ENCODE measurements at regions of chr19 and their contacts with region 1.

Region 1: GRCh38 chr19:4342615-4343369 is 570 bp upstream of the MPND start:
- DNase-seq: peak; percentile 80 to 99 (median 87)
- ATAC-seq: peak; percentile 78
- H3K4me3 ChIP-seq: peak overlapping the region; percentile 72 to 100
- H3K4me3 Mint-ChIP-seq: peak overlapping the region; percentile 92
- H3K27ac ChIP-seq: peak overlapping the region; percentile 81 to 83
- H3K27ac Mint-ChIP-seq: peak overlapping the region; percentile 91
- H3K4me1 ChIP-seq: peaks cover 20% of the 10 kb centered on the region
- H3K4me1 Mint-ChIP-seq: peaks cover 36% of the 10 kb centered on the region
- H3K27me3 ChIP-seq: no peaks in the 10 kb centered on the region
- H3K27me3 Mint-ChIP-seq: no peaks in the 10 kb centered on the region
- CTCF ChIP-seq: no peak

Region 2: DNA sequence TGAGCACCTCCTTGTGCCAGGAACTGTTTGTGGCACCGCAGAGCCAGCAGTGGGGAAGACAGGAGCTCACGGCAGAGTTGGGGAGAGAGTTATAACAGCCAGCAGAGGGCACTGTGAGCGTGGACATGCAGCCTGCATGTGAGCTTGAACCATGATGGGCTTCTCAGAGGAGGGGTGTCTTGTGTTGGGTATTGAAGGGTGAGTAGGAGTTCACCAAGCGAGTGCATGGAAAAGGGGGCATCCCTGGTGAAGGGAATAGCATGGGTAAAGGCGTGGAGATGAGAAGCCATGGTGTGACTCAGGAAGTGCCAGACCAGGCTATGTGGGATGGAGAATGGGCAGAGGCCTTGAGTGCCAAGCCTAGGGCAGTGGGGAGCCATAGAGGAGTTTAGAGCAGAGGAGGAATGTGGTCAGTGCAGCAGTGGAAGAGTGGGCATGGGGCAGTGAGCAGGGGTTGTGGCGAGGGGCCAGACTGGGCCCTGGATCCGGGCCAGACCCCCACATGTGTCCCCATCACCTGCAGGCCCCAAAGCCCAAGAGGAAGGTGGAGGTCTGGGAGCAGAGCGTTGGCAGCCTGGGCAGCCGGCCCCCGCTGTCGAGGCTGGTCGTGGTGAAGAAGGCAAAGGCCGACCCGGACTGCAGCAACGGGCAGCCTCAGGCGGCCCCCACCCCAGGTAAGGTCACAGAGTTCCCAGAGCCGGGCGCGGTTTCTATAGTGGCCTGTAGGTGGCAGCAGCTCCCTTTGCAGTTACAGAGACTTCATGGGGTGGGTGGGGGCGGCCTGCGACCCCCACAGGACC is 75.5 kb before region 1 on chr19:
- CTCF ChIA-PET with region 1: interaction called, 16 read pairs
- POLR2A ChIA-PET with region 1: interaction called, 5 read pairs
- intact Hi-C with region 1: no loop called
- DNase-seq: peak; percentile 37 to 76 (median 65)
- ATAC-seq: peak; percentile 70
- H3K4me3 ChIP-seq: no peak overlapping the region
- H3K4me3 Mint-ChIP-seq: no peak overlapping the region
- H3K27ac ChIP-seq: no peak overlapping the region
- H3K27ac Mint-ChIP-seq: peak overlapping the region; percentile 23
- H3K4me1 ChIP-seq: peaks cover 15% of the 10 kb centered on the region
- H3K4me1 Mint-ChIP-seq: peaks cover 25% of the 10 kb centered on the region
- H3K27me3 ChIP-seq: no peaks in the 10 kb centered on the region
- H3K27me3 Mint-ChIP-seq: no peaks in the 10 kb centered on the region
- CTCF ChIP-seq: peak; percentile 82

Region 3: DNA sequence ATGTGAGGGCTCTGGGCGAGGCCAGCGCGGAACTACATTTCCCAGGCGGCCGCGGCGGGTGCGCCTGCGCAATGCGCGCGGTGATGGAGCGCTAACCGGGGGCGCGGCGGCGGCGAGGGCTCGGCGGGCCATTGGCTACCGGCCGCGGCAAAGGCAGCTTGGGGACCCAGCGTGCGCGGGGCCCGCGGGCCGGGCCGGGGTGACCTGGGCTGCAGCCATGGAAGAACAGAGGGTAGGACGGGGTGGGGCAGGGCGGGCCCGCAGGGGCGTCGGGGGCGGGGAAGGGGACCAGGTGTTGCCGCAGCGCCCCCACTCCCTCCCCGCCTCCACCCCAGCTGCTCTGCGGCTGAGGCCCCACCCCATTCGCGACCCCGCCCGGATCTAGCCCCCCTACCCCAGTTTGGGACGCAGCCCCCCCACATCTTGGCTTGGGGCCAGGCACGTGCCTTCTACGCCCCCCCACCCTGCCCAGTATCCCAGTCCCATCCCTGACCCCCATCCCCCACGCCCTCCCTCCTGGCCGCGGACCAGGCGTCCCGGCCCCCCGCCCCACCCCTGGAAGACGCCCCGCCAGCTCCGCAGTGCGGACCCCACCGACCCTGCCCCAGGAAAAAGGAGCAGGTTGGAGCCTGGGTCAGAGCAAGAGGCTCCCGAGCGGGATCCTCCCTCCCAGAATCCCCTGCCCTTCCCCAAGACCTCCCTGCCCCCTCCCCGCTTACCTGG is 38.1 kb before region 1 on chr19 and contains the start of gene FSD1:
- CTCF ChIA-PET with region 1: no interaction called
- POLR2A ChIA-PET with region 1: interaction called, 5 read pairs
- intact Hi-C with region 1: loop called in 1 of 2 experiments (anchors 1 kb)
- DNase-seq: peak; percentile 32 to 75 (median 61)
- ATAC-seq: peak; percentile 57
- H3K4me3 ChIP-seq: peak within 1 kb of the TSS in 1 of 2 experiments; percentile 46
- H3K4me3 Mint-ChIP-seq: peak within 1 kb of the TSS; percentile 62
- H3K27ac ChIP-seq: peak within 1 kb of the TSS in 1 of 2 experiments; percentile 22
- H3K27ac Mint-ChIP-seq: peak within 1 kb of the TSS; percentile 86
- H3K4me1 ChIP-seq: peaks cover 31% of the 10 kb centered on the region
- H3K4me1 Mint-ChIP-seq: peaks cover 29% of the 10 kb centered on the region
- H3K27me3 ChIP-seq: no peaks in the 10 kb centered on the region
- H3K27me3 Mint-ChIP-seq: no peaks in the 10 kb centered on the region
- CTCF ChIP-seq: no peak
- total RNA-seq, gene FSD1: 3.1 to 4.9 TPM

Region 4: GRCh38 chr19:4328243-4328990 is 14.4 kb before region 1 on chr19:
- CTCF ChIA-PET with region 1: interaction called, 3 read pairs
- POLR2A ChIA-PET with region 1: interaction called, 10 read pairs
- intact Hi-C with region 1: loop called (anchors 1 kb)
- DNase-seq: peak; percentile 84 to 99 (median 97)
- ATAC-seq: peak; percentile 95
- H3K4me3 ChIP-seq: peak overlapping the region; percentile 53 to 81
- H3K4me3 Mint-ChIP-seq: peak overlapping the region; percentile 80
- H3K27ac ChIP-seq: peak overlapping the region in 1 of 2 experiments; percentile 55
- H3K27ac Mint-ChIP-seq: peak overlapping the region; percentile 92
- H3K4me1 ChIP-seq: peaks cover 20% of the 10 kb centered on the region
- H3K4me1 Mint-ChIP-seq: peaks cover 27% of the 10 kb centered on the region
- H3K27me3 ChIP-seq: no peaks in the 10 kb centered on the region
- H3K27me3 Mint-ChIP-seq: no peaks in the 10 kb centered on the region
- CTCF ChIP-seq: no peak

Region 5: DNA sequence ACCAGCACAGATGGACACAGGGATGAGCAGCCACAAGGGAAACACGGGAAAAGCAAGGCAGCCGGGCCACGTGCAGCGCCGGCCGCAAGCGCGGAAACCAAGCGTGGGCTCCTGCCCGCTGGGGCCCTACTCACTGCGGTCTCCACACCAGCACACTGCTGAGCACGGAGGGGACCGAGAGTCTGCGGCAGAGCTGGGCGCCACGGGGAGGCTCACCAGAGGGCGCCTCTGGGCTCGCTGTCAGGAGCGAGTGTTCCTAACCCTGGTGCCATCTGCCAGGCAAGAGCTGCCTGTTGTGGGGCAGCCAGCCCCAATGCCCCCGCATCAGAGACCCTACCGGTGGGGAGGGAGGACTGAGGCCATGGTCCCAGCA is 27.1 kb after region 1 on chr19:
- CTCF ChIA-PET with region 1: interaction called, 4 read pairs
- POLR2A ChIA-PET with region 1: interaction called, 3 read pairs
- intact Hi-C with region 1: loop called (anchors 1 kb)
- DNase-seq: peak; percentile 56 to 86 (median 75)
- ATAC-seq: peak; percentile 70
- H3K4me3 ChIP-seq: peak overlapping the region; percentile 58 to 65
- H3K4me3 Mint-ChIP-seq: peak overlapping the region; percentile 91
- H3K27ac ChIP-seq: peak overlapping the region; percentile 67 to 87
- H3K27ac Mint-ChIP-seq: peak overlapping the region; percentile 96
- H3K4me1 ChIP-seq: peaks cover 35% of the 10 kb centered on the region
- H3K4me1 Mint-ChIP-seq: peaks cover 32% of the 10 kb centered on the region
- H3K27me3 ChIP-seq: no peaks in the 10 kb centered on the region
- H3K27me3 Mint-ChIP-seq: no peaks in the 10 kb centered on the region
- CTCF ChIP-seq: peak; percentile 57

Region 6: DNA sequence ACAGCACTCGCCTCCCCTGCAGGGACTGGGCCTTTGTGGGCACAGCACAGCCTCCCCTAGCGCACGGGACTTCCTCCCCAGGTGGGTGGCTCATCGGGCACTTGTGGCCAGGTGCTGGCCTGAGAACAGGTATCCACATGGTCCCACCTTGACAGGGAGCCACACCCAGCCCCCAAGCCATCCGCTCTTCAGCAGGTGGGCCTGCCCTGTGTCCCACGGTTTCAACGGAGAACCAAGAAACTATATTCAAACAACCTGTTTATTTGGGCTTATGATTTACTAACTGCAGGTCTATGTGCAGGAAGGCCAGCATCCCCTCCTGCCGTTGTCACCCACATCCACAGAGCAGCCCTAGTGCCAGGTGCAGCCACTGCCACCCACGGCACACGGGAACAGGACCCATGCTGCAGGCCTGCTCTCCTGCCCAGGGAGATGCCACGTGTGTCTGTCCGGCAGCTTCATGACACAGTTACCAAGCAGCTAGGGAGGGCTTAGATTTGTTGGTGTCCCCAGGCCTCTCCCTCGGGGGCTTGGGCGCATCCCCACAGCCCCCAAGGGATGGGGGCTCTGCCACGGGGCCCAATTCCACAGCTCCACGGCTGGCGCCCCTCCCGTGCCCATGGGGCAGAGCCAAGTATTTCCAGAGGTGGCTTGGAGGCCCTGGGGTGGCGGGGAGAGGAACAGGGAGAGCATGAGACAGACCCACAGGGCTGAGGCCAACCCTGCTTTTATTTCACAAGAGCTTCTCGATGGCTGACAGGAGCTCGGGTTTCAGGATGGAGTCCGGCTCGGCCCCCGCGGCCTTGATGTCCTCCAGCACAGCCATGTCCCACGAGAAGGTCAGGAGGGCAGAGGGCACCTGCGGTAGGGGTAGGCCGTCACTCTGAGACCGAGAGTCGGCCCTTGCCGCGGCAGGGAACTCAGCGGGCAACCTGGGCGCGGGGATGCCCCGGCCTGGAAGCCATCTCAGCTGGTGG is 102.3 kb after region 1 on chr19:
- CTCF ChIA-PET with region 1: no interaction called
- POLR2A ChIA-PET with region 1: no interaction called
- intact Hi-C with region 1: no loop called
- DNase-seq: no peak
- ATAC-seq: no peak
- H3K4me3 ChIP-seq: no peak overlapping the region
- H3K4me3 Mint-ChIP-seq: no peak overlapping the region
- H3K27ac ChIP-seq: no peak overlapping the region
- H3K27ac Mint-ChIP-seq: no peak overlapping the region
- H3K4me1 ChIP-seq: no peaks in the 10 kb centered on the region
- H3K4me1 Mint-ChIP-seq: no peaks in the 10 kb centered on the region
- H3K27me3 ChIP-seq: no peaks in the 10 kb centered on the region
- H3K27me3 Mint-ChIP-seq: no peaks in the 10 kb centered on the region
- CTCF ChIP-seq: no peak

Region 7: GRCh38 chr19:4457654-4458395 is 115.0 kb after region 1 on chr19 and contains the start of gene UBXN6:
- CTCF ChIA-PET with region 1: interaction called, 4 read pairs
- POLR2A ChIA-PET with region 1: no interaction called
- intact Hi-C with region 1: loop called in 1 of 2 experiments (anchors 1 kb)
- DNase-seq: peak; percentile 95 to 99 (median 97)
- ATAC-seq: peak; percentile 96
- H3K4me3 ChIP-seq: peak within 1 kb of the TSS; percentile 47 to 70
- H3K4me3 Mint-ChIP-seq: peak within 1 kb of the TSS; percentile 89
- H3K27ac ChIP-seq: peak within 1 kb of the TSS; percentile 63 to 73
- H3K27ac Mint-ChIP-seq: peak within 1 kb of the TSS; percentile 92
- H3K4me1 ChIP-seq: peaks cover 12% of the 10 kb centered on the region
- H3K4me1 Mint-ChIP-seq: peaks cover 18% of the 10 kb centered on the region
- H3K27me3 ChIP-seq: no peaks in the 10 kb centered on the region
- H3K27me3 Mint-ChIP-seq: no peaks in the 10 kb centered on the region
- CTCF ChIP-seq: no peak
- total RNA-seq, gene UBXN6: 61.5 to 62.6 TPM

Region 8: DNA sequence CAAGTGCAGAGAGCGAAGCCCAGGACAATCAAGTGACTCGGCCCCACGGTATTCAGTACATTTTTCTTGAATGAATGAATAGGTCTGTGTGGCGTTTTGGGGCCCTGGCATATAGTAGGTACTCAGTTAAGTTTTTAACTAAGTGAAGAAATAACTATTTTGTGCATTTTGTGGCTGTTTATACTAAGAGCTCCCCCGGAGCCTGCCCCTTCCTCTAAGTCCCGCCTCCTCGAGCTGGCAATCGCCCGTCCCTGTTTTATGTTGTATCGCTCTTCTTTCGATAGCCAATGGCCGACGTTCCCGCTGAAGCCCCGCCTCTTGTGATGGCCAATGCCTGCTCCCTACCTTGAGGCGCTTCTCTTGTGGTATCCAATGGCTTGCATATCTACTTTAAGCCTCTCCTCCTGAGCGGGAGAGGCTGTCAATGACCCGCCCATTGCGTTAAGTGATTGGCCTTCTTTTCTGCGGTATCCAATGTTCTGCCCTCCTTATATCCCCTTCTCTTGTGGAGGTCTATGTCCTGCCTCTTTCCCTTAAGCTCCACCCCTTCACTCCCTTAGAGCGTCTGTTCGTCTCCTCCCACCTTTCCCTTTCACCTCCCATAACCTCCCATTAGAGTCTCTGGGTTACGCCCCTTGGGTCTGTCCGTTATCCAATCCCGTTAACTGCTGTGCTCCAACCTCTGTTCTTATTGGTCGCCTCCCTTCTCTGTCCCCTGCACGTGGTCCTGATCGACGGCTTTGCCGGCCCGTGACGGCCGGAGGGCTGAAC is 128.8 kb after region 1 on chr19:
- CTCF ChIA-PET with region 1: no interaction called
- POLR2A ChIA-PET with region 1: interaction called, 10 read pairs
- intact Hi-C with region 1: no loop called
- DNase-seq: peak; percentile 94 to 100 (median 97)
- ATAC-seq: peak; percentile 85
- H3K4me3 ChIP-seq: peak overlapping the region; percentile 55 to 63
- H3K4me3 Mint-ChIP-seq: no peak overlapping the region
- H3K27ac ChIP-seq: peak overlapping the region; percentile 70 to 72
- H3K27ac Mint-ChIP-seq: no peak overlapping the region
- H3K4me1 ChIP-seq: peaks cover 20% of the 10 kb centered on the region
- H3K4me1 Mint-ChIP-seq: peaks cover 22% of the 10 kb centered on the region
- H3K27me3 ChIP-seq: no peaks in the 10 kb centered on the region
- H3K27me3 Mint-ChIP-seq: no peaks in the 10 kb centered on the region
- CTCF ChIP-seq: no peak